Posterior vena cava (tissue), 2 donors: ENCODE measurements at regions of chr17 and their contacts with region 1.

Region 1: DNA sequence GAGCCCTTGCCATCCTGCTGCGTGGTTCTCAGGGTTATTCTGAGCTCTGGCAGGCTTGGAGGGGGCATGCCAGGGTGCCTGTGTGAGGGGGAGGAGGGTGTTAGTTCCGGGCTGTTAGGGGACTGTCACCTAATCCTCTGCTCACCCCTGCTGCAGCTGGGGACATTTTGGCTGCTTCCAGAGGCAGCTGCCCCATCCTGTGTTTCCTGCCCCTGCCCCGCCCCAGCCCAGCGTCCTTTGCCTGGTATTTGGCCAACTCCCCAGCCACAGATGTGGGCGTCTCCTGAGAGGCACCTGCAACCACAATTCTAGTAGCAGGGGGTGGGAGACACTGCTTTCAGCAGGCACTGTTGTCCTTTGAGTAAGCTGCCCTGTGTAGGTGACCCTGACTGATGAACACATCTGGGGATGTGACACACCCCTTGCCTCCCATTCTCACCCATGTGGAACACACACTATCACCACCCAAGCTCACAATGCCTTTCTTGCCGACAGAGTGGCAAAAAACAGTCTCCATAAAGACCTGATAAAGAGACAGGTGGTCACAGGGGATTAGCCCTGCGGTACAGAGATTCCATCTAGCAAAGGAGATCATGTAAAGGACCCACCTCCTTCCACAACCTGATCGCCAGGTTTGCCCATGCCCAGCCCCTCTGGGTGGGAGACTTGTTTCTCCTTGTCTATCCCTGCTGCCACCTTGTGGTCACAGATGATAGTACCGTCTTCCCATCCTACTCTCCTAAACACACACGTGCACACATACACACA is at the start of gene CHRNE:
- DNase-seq: no peak
- total RNA-seq, gene CHRNE: 0.57 to 1.5 TPM

Region 2: GRCh38 chr17:4845118-4845517 is 58.1 kb before region 1 on chr17:
- intact Hi-C with region 1: no loop called
- DNase-seq: no peak

Region 3: GRCh38 chr17:6894206-6894528 is 1990.9 kb after region 1 on chr17:
- intact Hi-C with region 1: loop called in 1 of 2 experiments (anchors 5 kb)
- DNase-seq: no peak